Transverse colon (tissue), 4 donors: ENCODE measurements at regions of chr11 and their contacts with region 1.

Region 1: GRCh38 chr11:94519478-94520084 is 7.3 kb downstream of the C11orf97 start:
- DNase-seq: no peak
- H3K4me3 ChIP-seq: no peak overlapping the region
- H3K27ac ChIP-seq: no peak overlapping the region
- H3K4me1 ChIP-seq: peaks cover 0 to 7% (median 2%) of the 10 kb centered on the region in 4 donors
- H3K27me3 ChIP-seq: no peaks in the 10 kb centered on the region
- CTCF ChIP-seq: peak; percentile 55 to 78 (median 71)
- EP300 ChIP-seq: no peak
- POLR2A ChIP-seq: no peak

Region 2: DNA sequence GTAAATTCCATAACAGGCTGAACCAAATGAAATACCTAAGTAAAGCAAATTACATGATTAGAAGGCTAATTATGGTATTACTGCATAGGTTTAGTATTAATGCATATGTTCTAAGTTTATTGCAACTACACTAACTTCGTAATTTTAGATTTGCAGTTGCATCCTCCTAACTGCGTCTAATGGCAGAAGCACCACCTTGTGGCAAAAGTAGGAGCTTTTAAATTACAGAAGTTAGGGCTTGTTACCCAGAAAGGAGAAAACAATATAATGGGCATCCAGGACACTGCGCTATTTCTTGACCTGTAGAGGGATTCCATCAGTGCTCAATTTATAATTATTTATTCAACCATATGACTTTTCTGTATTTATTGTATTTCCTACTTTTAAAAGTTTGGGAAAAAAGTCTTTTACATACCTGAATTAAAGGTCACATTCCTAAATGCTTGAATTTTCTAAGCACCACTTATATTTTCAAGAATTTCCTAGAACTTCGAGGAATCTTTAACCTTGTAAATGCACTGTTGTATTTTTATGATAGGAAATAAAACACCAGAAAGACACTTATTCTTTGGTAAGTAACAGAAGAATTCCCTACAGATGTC is 102.1 kb before region 1 on chr11:
- in situ Hi-C with region 1: no loop called
- intact Hi-C with region 1: no loop called
- DNase-seq: no peak
- H3K4me3 ChIP-seq: no peak overlapping the region
- H3K27ac ChIP-seq: no peak overlapping the region
- H3K4me1 ChIP-seq: no peaks in the 10 kb centered on the region
- H3K27me3 ChIP-seq: no peaks in the 10 kb centered on the region
- CTCF ChIP-seq: peak; percentile 22 to 37 (median 30)
- EP300 ChIP-seq: no peak
- POLR2A ChIP-seq: no peak

Region 3: DNA sequence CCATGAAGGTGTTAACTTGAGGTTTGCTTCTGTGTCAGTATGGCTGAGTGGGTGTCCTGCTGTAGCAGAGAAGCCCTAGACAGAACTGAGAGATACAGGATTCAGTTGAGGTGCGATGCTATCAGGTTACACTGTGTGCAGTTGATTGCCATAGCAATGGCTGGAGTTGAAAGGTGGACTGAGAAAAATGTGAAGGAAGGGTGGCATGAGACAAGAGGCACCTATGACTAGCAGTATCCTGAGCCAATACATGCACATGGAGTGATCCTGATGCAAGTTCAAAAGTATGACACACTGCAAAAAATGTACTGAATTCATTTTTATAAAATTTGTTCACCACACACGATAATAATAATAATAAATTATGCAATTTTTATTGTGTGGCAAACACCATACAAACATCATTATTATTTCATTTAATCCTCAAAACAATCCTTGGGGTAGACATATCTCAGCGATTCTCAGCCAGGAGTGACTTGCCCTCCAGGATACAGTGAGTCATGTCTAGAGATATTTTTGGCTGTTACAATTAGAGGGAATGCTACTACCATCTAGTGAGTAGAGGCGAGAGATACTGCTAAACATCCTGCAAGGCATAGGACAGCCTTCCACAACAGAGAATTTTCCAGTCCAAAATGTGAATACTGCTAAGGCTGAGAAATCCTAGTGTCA is 43.7 kb after region 1 on chr11:
- in situ Hi-C with region 1: no loop called
- intact Hi-C with region 1: loop called (anchors 5 kb)
- DNase-seq: no peak
- H3K4me3 ChIP-seq: no peak overlapping the region
- H3K27ac ChIP-seq: no peak overlapping the region
- H3K4me1 ChIP-seq: peaks cover 0 to 4% (median 0%) of the 10 kb centered on the region in 4 donors
- H3K27me3 ChIP-seq: no peaks in the 10 kb centered on the region
- CTCF ChIP-seq: no peak
- EP300 ChIP-seq: no peak
- POLR2A ChIP-seq: no peak

Region 4: GRCh38 chr11:94593030-94593429 is 73.4 kb after region 1 on chr11:
- in situ Hi-C with region 1: loop called in 1 of 4 experiments (anchors 10 kb)
- intact Hi-C with region 1: no loop called
- DNase-seq: no peak
- H3K4me3 ChIP-seq: no peak overlapping the region
- H3K27ac ChIP-seq: no peak overlapping the region
- H3K4me1 ChIP-seq: no peaks in the 10 kb centered on the region
- H3K27me3 ChIP-seq: no peaks in the 10 kb centered on the region
- CTCF ChIP-seq: no peak
- EP300 ChIP-seq: no peak
- POLR2A ChIP-seq: no peak

Region 5: GRCh38 chr11:94602430-94603372 is 83.1 kb after region 1 on chr11:
- in situ Hi-C with region 1: loop called in 2 of 4 experiments (anchors 10 kb)
- intact Hi-C with region 1: no loop called
- DNase-seq: peak; percentile 65
- H3K4me3 ChIP-seq: no peak overlapping the region
- H3K27ac ChIP-seq: peak overlapping the region in 1 of 4 donors; percentile 10
- H3K4me1 ChIP-seq: no peaks in the 10 kb centered on the region
- H3K27me3 ChIP-seq: no peaks in the 10 kb centered on the region
- CTCF ChIP-seq: peak in 3 of 5 experiments; percentile 37 to 45 (median 39)
- EP300 ChIP-seq: no peak
- POLR2A ChIP-seq: no peak